ENCODE measurements at regions of chr12 and their contacts with region 1.

Region 1: GRCh38 chr12:122111089-122111641 is 32.6 kb downstream of the MLXIP start:
- DNase-seq: peak; percentile 94
- ATAC-seq: peak; percentile 67
- H3K4me3 ChIP-seq: peak overlapping the region; percentile 15; the same call in 1 of the 2 replicates
- H3K27ac ChIP-seq: peak overlapping the region; percentile 92
- H3K4me1 ChIP-seq: peaks cover 38% of the 10 kb centered on the region
- H3K27me3 ChIP-seq: no peaks in the 10 kb centered on the region
- CTCF ChIP-seq: no peak

Region 2: DNA sequence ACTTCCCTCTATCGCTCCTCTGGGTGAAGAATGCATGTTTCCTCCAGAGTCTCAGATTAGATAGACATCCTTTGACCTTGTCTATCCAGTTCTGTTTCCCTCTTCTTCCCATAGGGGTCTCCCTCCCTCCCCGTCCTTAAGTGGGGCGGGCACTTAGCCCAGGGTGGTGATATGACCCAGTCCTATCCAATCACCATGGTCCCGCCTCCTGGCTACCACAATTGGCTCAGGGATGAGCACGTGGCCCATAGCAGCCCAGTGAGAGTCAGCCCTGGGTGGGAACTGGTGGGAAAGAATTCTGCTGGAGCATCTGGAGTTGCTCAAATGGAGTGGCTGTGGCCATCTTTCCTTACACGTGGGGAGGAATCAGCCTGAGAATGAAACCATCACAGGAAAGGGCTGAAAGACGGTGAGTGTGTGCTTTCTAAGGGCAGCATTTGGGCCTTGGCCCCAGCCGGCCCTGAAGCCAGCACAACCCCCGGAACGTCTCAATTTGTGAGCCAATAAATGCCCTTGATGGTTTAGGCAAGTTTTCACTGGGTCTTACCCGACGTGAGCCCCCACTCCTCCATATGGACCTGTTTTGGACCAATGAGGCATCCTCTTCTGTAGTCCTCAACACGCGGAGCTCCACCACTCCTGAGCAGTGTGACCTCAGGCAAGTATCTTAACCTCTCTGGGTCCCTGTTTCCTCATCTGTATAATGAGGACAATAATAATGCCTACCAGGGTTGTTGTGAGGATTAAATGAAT is 47.0 kb before region 1 on chr12:
- CTCF ChIA-PET with region 1: interaction called, 3 read pairs
- POLR2A ChIA-PET with region 1: no interaction called
- intact Hi-C with region 1: loop called (anchors 2 kb)
- DNase-seq: peak; percentile 82
- ATAC-seq: peak; percentile 32
- H3K4me3 ChIP-seq: no peak overlapping the region
- H3K27ac ChIP-seq: peak overlapping the region; percentile 83
- H3K4me1 ChIP-seq: peaks cover 38% of the 10 kb centered on the region
- H3K27me3 ChIP-seq: no peaks in the 10 kb centered on the region
- CTCF ChIP-seq: peak; percentile 57

Region 3: GRCh38 chr12:122078141-122079032 is 32.8 kb before region 1 on chr12 and contains the start of gene MLXIP:
- CTCF ChIA-PET with region 1: no interaction called
- POLR2A ChIA-PET with region 1: interaction called, 6 read pairs
- intact Hi-C with region 1: loop called (anchors 1 kb)
- DNase-seq: peak; percentile 96
- ATAC-seq: peak; percentile 69
- H3K4me3 ChIP-seq: peak within 1 kb of the TSS; percentile 81
- H3K27ac ChIP-seq: peak within 1 kb of the TSS; percentile 11
- H3K4me1 ChIP-seq: peaks cover 27% of the 10 kb centered on the region
- H3K27me3 ChIP-seq: no peaks in the 10 kb centered on the region
- CTCF ChIP-seq: no peak
- total RNA-seq, gene MLXIP: 16.7 and 21.8 TPM in 2 replicates

Region 4: DNA sequence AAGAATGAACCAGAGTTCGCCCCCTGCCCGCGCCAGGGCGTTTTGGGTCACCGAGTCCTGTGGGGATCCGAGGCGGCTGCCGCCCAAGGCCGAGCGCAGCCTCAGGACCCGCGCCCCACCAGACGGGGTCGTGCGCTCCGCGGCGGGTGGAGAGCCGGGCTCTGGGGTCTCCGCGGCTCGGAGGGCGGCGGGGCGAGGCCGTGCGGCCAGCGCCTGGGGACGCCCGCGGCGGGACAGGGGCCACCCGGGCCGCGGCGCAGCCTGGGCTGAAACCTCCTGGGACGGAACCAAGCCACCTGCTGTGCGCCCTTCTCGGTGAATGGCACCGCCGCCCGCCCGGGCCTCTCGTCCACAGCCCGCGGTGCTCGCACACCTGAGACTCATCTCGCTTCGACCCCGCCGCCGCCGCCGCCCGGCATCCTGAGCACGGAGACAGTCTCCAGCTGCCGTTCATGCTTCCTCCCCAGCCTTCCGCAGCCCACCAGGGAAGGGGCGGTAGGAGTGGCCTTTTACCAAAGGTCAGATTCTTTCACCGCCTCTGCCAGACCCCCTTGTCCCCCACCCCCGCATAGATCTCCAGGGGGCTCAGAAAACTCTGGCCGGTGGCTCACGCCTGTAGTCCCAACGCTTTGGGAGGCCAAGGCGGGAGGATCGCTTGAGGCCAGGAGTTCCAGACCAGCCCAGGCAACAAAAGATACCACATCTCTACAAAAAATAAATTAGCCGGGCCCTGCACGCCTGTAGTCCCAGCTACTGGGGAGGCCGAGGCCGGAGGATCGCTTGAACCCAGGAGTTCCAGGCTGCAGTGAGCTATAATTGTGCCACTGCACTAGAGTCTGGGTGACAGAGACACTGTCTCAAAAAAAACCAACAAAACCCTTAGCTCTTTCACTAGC is 93.2 kb after region 1 on chr12:
- CTCF ChIA-PET with region 1: no interaction called
- POLR2A ChIA-PET with region 1: no interaction called
- intact Hi-C with region 1: no loop called
- DNase-seq: no peak
- ATAC-seq: peak; percentile 29
- H3K4me3 ChIP-seq: peak overlapping the region; percentile 65
- H3K27ac ChIP-seq: no peak overlapping the region
- H3K4me1 ChIP-seq: no peaks in the 10 kb centered on the region
- H3K27me3 ChIP-seq: no peaks in the 10 kb centered on the region
- CTCF ChIP-seq: no peak